ENCODE measurements at regions of chr14 and their contacts with region 1.

Region 1: DNA sequence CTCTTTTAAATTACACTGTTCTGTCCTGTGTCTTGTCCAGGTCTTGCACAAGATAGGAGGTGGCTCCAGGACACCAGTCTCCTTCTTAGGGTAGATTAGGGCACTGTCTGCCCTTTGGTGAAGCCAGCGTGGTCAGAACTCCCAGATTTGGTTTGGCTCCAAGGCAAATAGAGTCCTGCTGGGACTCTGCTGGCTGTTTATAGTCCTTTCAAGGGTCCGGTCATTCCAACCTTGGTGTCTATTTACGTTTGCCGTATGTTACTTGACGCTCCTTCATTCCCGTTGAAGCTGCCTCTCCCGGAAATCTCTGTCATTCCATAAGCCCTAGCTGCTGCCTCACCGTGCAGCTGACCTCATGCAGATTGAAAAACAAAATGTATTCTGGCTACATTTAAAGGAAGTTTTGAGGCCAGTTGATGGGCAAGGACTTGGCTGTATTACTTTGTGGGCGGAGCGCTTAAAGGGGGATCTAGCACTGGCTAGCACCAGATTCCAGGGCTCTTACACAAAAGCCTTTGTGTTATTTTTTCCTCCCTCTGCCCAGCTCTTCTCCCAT is 180.6 kb downstream of the AKAP6 start:
- DNase-seq: peak; percentile 93
- H3K4me3 ChIP-seq: peak overlapping the region in 1 of 3 experiments; percentile 10
- H3K27ac ChIP-seq: peak overlapping the region; percentile 87
- H3K4me1 ChIP-seq: peaks cover 41% of the 10 kb centered on the region
- H3K27me3 ChIP-seq: no peaks in the 10 kb centered on the region
- CTCF ChIP-seq: no peak

Region 2: GRCh38 chr14:31945074-31945613 is 564.6 kb before region 1 on chr14:
- CTCF ChIA-PET with region 1: no interaction called
- dilution Hi-C with region 1: no loop called
- in situ Hi-C with region 1: no loop called
- intact Hi-C with region 1: loop called (anchors 5 kb)
- DNase-seq: no peak
- H3K4me3 ChIP-seq: no peak overlapping the region
- H3K27ac ChIP-seq: peak overlapping the region; percentile 4
- H3K4me1 ChIP-seq: peaks cover 58% of the 10 kb centered on the region
- H3K27me3 ChIP-seq: no peaks in the 10 kb centered on the region
- CTCF ChIP-seq: no peak

Region 3: GRCh38 chr14:32202998-32203882 is 306.5 kb before region 1 on chr14 and contains the start of gene RNU6-8:
- CTCF ChIA-PET with region 1: no interaction called
- dilution Hi-C with region 1: no loop called
- in situ Hi-C with region 1: no loop called
- intact Hi-C with region 1: loop called (anchors 5 kb)
- DNase-seq: peak; percentile 79
- H3K4me3 ChIP-seq: peak within 1 kb of the TSS; percentile 68 to 74 (median 74)
- H3K27ac ChIP-seq: peak within 1 kb of the TSS; percentile 91
- H3K4me1 ChIP-seq: peaks cover 38% of the 10 kb centered on the region
- H3K27me3 ChIP-seq: no peaks in the 10 kb centered on the region
- CTCF ChIP-seq: no peak
- total RNA-seq, gene RNU6-8: not detected

Region 4: DNA sequence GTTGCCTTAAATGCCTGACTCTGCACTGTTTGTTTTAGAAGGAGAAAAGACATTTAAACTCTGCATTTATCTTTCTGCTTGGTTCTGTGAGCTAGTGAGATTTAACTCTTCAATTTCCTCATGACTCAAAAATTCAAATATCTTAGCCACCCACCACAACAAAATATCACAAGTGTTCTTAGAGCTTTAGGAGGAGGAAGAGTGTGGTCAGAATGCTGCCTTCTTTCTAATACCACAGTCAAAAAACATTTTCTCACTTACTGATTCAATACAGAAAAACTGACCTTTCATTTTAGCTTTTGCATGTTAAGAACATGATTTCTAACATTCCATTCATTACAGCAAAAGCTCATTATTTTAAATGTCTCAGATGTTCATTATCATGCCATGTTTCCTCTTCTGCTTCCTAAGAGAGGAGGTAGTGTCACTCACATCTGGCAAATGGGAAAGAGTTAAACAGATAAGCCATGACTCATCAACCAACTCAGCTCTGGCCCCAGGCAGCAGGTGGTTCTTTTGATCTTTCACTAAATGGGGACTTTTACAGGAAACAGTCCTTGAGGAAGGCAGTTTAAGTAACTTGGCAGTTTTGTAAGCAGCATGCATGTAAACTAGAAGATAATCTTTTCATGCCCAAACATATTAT is 250.2 kb before region 1 on chr14:
- CTCF ChIA-PET with region 1: interaction called, 4 read pairs
- dilution Hi-C with region 1: no loop called
- in situ Hi-C with region 1: loop called in 1 of 2 experiments (anchors 5 kb)
- intact Hi-C with region 1: loop called (anchors 1 kb)
- DNase-seq: peak; percentile 82
- H3K4me3 ChIP-seq: no peak overlapping the region
- H3K27ac ChIP-seq: no peak overlapping the region
- H3K4me1 ChIP-seq: peaks cover 10% of the 10 kb centered on the region
- H3K27me3 ChIP-seq: no peaks in the 10 kb centered on the region
- CTCF ChIP-seq: no peak

Region 5: DNA sequence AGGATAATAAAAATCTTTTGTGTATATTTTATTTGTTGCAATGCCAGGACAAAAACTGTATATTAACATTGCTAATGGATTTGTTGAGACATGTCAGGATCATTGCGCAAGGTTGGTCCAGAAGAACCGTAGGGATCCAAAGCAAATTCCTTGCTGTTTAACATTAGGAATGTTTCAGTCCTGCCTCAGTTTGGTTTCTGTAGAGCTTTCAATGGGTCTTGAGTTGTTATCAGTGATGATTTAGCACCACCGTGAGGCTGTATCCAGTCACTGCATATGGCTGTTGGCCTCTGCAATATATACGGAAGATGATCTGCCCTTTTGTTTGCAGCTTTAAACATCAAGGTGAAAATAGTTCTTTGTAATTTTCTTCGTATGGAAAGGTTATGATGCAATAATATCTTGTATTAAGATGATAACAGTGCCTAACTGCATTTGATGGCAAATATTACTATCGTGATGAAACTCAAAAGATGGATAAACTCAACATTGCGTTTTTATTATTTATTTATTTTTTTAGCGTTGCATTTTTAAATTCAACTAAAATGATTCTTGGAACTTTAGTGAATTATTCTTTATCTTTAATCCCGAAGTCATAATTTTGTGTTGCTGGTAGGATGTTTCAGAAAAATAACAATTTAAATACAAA is 50.6 kb after region 1 on chr14:
- CTCF ChIA-PET with region 1: interaction called, 3 read pairs
- dilution Hi-C with region 1: no loop called
- in situ Hi-C with region 1: no loop called
- intact Hi-C with region 1: loop called (anchors 2 kb)
- DNase-seq: peak; percentile 74
- H3K4me3 ChIP-seq: no peak overlapping the region
- H3K27ac ChIP-seq: peak overlapping the region; percentile 53
- H3K4me1 ChIP-seq: peaks cover 19% of the 10 kb centered on the region
- H3K27me3 ChIP-seq: no peaks in the 10 kb centered on the region
- CTCF ChIP-seq: peak; percentile 84 to 98

Measured in mammary epithelial cell (primary cell).